CD8-positive, alpha-beta memory T cell (primary cell): ENCODE measurements at regions of chr3 and their contacts with region 1.

Region 1: DNA sequence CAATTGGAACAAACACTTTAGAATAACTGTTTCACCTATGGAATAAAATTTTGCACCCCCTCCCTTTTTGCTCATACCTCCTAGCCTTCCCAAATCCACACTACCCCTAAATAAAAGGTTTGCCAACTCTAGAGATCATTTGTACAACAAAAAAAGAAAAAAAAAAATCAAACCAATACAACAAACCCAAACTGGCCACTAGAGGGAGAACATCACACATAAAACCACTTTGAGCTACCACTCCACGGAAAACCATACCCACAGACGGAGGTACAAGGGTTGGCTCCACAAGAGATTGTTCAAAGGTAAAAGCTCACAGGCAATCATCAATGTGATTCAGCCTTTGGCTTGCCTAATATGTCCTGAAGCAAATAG is 47.6 kb downstream of the SETMAR start:
- DNase-seq: peak; percentile 26 to 75 (median 60)
- H3K4me3 ChIP-seq: no peak overlapping the region
- H3K4me3 Mint-ChIP-seq: peak overlapping the region; percentile 14 to 85 (median 72)
- H3K27ac ChIP-seq: peak overlapping the region; percentile 64
- H3K27ac Mint-ChIP-seq: peak overlapping the region in 5 of 8 donors; percentile 5 to 84 (median 20)
- H3K4me1 ChIP-seq: no peaks in the 10 kb centered on the region
- H3K4me1 Mint-ChIP-seq: peaks cover 12 to 21% (median 17%) of the 10 kb centered on the region in 3 donors
- H3K27me3 ChIP-seq: no peaks in the 10 kb centered on the region
- H3K27me3 Mint-ChIP-seq: no peaks in the 10 kb centered on the region

Region 2: GRCh38 chr3:3675801-3676200 is 675.0 kb before region 1 on chr3:
- CTCF ChIA-PET with region 1: no interaction called
- POLR2A ChIA-PET with region 1: no interaction called
- DNase-seq: no peak
- H3K4me3 ChIP-seq: no peak overlapping the region
- H3K4me3 Mint-ChIP-seq: no peak overlapping the region
- H3K27ac ChIP-seq: no peak overlapping the region
- H3K27ac Mint-ChIP-seq: no peak overlapping the region
- H3K4me1 ChIP-seq: no peaks in the 10 kb centered on the region
- H3K4me1 Mint-ChIP-seq: no peaks in the 10 kb centered on the region
- H3K27me3 ChIP-seq: no peaks in the 10 kb centered on the region
- H3K27me3 Mint-ChIP-seq: no peaks in the 10 kb centered on the region

Region 3: DNA sequence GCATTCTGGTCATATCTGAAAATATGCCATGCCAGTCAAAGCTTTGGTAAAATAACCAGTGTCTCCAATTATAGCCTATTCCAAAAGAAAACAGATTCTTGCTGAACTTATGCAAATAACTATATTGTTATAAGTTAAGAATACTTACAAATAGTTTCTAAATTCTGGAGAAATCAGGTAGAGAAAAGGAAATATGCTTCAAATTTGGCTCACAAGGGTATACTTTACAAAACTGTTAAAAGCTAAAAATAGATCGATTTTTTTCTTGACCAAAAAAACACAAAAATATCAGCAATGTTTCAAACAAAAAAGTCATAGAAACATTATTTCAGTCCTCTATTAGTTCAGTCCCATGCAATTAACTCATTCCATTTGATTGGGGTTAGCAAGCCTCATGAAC is 23.9 kb before region 1 on chr3:
- CTCF ChIA-PET with region 1: no interaction called
- POLR2A ChIA-PET with region 1: no interaction called
- DNase-seq: no peak
- H3K4me3 ChIP-seq: no peak overlapping the region
- H3K4me3 Mint-ChIP-seq: no peak overlapping the region
- H3K27ac ChIP-seq: no peak overlapping the region
- H3K27ac Mint-ChIP-seq: no peak overlapping the region
- H3K4me1 ChIP-seq: no peaks in the 10 kb centered on the region
- H3K4me1 Mint-ChIP-seq: no peaks in the 10 kb centered on the region
- H3K27me3 ChIP-seq: no peaks in the 10 kb centered on the region
- H3K27me3 Mint-ChIP-seq: no peaks in the 10 kb centered on the region

Region 4: GRCh38 chr3:4340411-4341335 is 10.1 kb before region 1 on chr3:
- CTCF ChIA-PET with region 1: interaction called, 11 read pairs
- POLR2A ChIA-PET with region 1: no interaction called
- DNase-seq: no peak
- H3K4me3 ChIP-seq: no peak overlapping the region
- H3K4me3 Mint-ChIP-seq: no peak overlapping the region
- H3K27ac ChIP-seq: no peak overlapping the region
- H3K27ac Mint-ChIP-seq: peak overlapping the region in 2 of 8 donors; percentile 55 to 61
- H3K4me1 ChIP-seq: no peaks in the 10 kb centered on the region
- H3K4me1 Mint-ChIP-seq: no peaks in the 10 kb centered on the region
- H3K27me3 ChIP-seq: no peaks in the 10 kb centered on the region
- H3K27me3 Mint-ChIP-seq: peaks cover 0 to 2% of the 10 kb centered on the region in 2 donors

Region 5: GRCh38 chr3:4517643-4518311 is 167.0 kb after region 1 on chr3:
- CTCF ChIA-PET with region 1: interaction called, 22 read pairs
- POLR2A ChIA-PET with region 1: interaction called, 5 read pairs
- DNase-seq: no peak
- H3K4me3 ChIP-seq: no peak overlapping the region
- H3K4me3 Mint-ChIP-seq: peak overlapping the region in 1 of 7 donors; percentile 69
- H3K27ac ChIP-seq: peak overlapping the region; percentile 3
- H3K27ac Mint-ChIP-seq: peak overlapping the region; percentile 62 to 94 (median 90)
- H3K4me1 ChIP-seq: peaks cover 28% of the 10 kb centered on the region
- H3K4me1 Mint-ChIP-seq: peaks cover 30 to 50% (median 44%) of the 10 kb centered on the region in 3 donors
- H3K27me3 ChIP-seq: no peaks in the 10 kb centered on the region
- H3K27me3 Mint-ChIP-seq: no peaks in the 10 kb centered on the region

Region 6: GRCh38 chr3:4584456-4585249 is 233.9 kb after region 1 on chr3:
- CTCF ChIA-PET with region 1: interaction called, 11 read pairs
- POLR2A ChIA-PET with region 1: interaction called, 3 read pairs
- DNase-seq: peak in 2 of 5 donors; percentile 4 to 10
- H3K4me3 ChIP-seq: peak overlapping the region; percentile 65
- H3K4me3 Mint-ChIP-seq: peak overlapping the region; percentile 70 to 94 (median 89)
- H3K27ac ChIP-seq: no peak overlapping the region
- H3K27ac Mint-ChIP-seq: peak overlapping the region; percentile 57 to 98 (median 92)
- H3K4me1 ChIP-seq: peaks cover 47% of the 10 kb centered on the region
- H3K4me1 Mint-ChIP-seq: peaks cover 70 to 89% (median 81%) of the 10 kb centered on the region in 3 donors
- H3K27me3 ChIP-seq: no peaks in the 10 kb centered on the region
- H3K27me3 Mint-ChIP-seq: no peaks in the 10 kb centered on the region